ENCODE measurements at regions of chr11 and their contacts with region 1.

Region 1: DNA sequence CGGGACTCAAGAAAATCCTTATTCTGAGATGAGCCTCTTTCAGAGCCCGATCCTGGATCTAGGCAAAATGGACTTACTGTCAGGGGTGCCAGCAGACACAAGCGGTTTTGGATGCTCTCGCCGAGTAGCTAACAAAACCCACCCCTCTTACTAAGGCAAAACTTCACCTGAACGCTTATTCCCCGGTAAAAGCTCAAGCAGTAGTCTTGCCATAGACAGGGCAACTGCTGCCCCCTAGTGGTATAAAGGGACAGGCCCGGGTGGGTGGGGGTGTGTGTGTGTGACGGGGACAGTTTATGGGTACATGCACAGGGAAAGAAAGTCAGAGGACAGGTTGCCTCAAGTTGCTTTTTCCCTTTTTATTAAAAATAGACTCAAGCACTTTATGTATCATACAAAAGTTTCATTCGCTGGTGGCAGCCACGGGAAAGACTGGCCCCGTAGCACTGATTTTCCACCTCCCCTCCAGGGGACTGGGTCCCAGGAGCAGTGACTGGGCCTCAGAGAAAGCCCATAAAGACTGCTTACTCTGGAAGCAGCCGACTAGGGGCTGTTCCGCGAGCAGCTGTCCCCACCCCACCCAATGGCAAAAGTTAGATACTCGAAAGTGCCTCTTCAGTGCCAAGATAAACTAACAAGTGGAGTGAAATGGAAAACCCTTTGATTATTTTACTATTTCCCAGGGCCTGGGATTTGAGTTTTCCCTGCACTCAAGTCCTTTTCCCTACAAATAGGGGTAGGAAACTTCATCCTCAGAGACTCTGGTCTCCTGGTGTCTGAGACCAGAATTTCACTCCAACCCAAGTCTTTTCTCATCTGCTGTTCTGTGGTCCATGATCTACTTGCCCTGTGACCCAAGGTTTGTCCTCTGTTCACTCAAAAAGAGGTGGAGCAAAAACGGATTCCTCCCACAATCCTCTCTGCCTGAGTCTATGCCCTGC is 4.7 kb downstream of the YPEL4 start:
- DNase-seq: peak; percentile 87
- H3K4me3 ChIP-seq: no peak overlapping the region
- H3K27ac ChIP-seq: peak overlapping the region in 3 of 4 donors; percentile 10 to 64 (median 21)
- H3K4me1 ChIP-seq: peaks cover 10 to 63% (median 16%) of the 10 kb centered on the region in 4 donors
- H3K27me3 ChIP-seq: peaks cover 50% of the 10 kb centered on the region
- CTCF ChIP-seq: peak; percentile 76 to 93 (median 91)
- EP300 ChIP-seq: no peak
- POLR2A ChIP-seq: no peak

Region 2: GRCh38 chr11:57324886-57325734 is 319.9 kb before region 1 on chr11 and contains the start of gene TNKS1BP1:
- in situ Hi-C with region 1: loop called in 2 of 4 experiments (anchors 25 kb)
- intact Hi-C with region 1: no loop called
- DNase-seq: peak; percentile 99
- H3K4me3 ChIP-seq: peak within 1 kb of the TSS; percentile 81 to 97 (median 86)
- H3K27ac ChIP-seq: peak within 1 kb of the TSS; percentile 92 to 98 (median 96)
- H3K4me1 ChIP-seq: peaks cover 20 to 56% (median 49%) of the 10 kb centered on the region in 4 donors
- H3K27me3 ChIP-seq: no peaks in the 10 kb centered on the region
- CTCF ChIP-seq: peak in 2 of 5 experiments; percentile 34 to 35
- EP300 ChIP-seq: no peak
- POLR2A ChIP-seq: peak; percentile 90
- total RNA-seq, gene TNKS1BP1: 74.3 to 122 (median 119) TPM

Region 3: DNA sequence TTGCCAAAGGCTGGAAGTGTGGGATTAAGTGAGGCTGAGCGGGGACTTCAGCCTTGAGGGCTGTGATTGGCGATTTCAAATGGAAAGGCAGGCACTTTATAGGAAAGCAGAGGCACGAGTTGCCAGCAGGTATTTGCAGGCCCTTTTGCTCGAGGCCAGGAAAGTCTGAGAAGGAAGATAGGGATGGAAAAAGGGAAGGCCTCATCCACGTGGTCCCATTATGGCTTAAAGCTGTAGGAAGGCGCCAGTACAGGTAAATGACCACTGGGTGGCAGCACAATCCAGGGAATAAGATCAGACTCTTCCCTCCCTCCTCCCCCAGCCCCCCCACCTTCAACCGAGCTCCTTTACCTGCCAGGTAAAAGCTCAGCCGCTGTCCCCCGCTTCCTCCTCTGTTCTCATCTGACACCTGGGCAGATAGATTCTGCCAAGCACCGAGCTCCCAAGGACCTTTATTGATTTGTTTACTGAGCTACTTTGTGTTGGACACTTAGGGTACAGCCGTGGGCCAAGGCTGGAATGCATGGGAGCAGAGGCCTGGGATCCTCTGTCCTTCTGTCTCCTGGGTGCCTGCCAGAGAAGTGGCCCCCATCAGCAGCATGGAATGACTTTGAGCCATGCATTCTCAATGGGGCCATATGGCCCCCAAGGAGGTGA is 299.3 kb before region 1 on chr11:
- in situ Hi-C with region 1: loop called in 3 of 4 experiments (anchors 10 to 25 kb)
- intact Hi-C with region 1: no loop called
- DNase-seq: peak; percentile 84
- H3K4me3 ChIP-seq: no peak overlapping the region
- H3K27ac ChIP-seq: no peak overlapping the region
- H3K4me1 ChIP-seq: peaks cover 0 to 9% (median 0%) of the 10 kb centered on the region in 4 donors
- H3K27me3 ChIP-seq: no peaks in the 10 kb centered on the region
- CTCF ChIP-seq: peak; percentile 70 to 86 (median 80)
- EP300 ChIP-seq: no peak
- POLR2A ChIP-seq: no peak

Region 4: GRCh38 chr11:57456960-57457642 is 187.9 kb before region 1 on chr11:
- in situ Hi-C with region 1: loop called in 2 of 4 experiments (anchors 25 kb)
- intact Hi-C with region 1: no loop called
- DNase-seq: peak; percentile 88
- H3K4me3 ChIP-seq: no peak overlapping the region
- H3K27ac ChIP-seq: no peak overlapping the region
- H3K4me1 ChIP-seq: peaks cover 27 to 46% (median 38%) of the 10 kb centered on the region in 4 donors
- H3K27me3 ChIP-seq: peaks cover 48% of the 10 kb centered on the region
- CTCF ChIP-seq: peak; percentile 93 to 100 (median 99)
- EP300 ChIP-seq: no peak
- POLR2A ChIP-seq: no peak

Region 5: DNA sequence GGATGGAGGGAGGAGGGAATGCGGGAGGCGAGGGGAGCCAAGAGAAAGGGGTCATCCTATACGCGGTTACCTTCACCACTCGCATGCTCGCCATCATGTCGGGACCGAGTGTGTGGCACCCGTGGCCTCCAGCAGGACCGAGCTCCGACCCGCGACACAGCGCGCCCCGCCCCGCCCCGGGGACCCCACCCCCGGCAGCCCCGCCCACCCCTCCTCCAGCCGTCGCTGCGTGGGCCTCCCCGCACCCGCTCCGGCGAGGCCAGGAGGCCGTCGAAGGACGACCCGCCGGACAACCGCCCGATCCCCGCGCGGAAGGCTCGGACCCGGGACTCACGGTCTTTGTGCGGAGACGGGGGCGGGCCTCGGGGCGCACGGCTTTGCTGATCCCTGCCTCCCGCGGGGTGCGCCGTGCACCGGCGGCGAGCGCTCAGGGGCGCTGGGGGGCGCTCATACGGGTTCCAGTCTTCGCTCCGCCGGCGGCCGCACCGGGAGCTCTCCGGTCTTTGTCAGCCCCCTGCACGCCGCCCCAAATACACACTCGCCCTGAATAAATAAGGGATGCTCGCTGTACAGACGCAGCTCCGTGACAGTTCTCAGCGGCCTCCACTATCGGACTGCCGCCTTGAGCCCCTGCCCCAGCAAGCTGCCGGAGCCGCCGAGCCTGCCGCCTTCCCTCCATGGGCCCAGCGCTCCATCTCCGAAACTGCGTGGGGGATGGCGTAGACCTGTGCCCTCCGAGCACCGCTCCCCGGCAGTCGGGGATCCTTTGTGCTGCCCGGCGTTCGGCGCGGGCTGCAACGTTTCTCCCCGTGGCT is 77.3 kb before region 1 on chr11 and contains the start of gene UBE2L6:
- in situ Hi-C with region 1: loop called in 2 of 4 experiments (anchors 5 to 10 kb)
- intact Hi-C with region 1: loop called (anchors 1 kb)
- DNase-seq: peak; percentile 87
- H3K4me3 ChIP-seq: peak within 1 kb of the TSS; percentile 70 to 81 (median 76)
- H3K27ac ChIP-seq: peak within 1 kb of the TSS; percentile 82 to 90 (median 88)
- H3K4me1 ChIP-seq: peaks cover 10 to 27% (median 16%) of the 10 kb centered on the region in 4 donors
- H3K27me3 ChIP-seq: no peaks in the 10 kb centered on the region
- CTCF ChIP-seq: no peak
- EP300 ChIP-seq: no peak
- POLR2A ChIP-seq: no peak
- total RNA-seq, gene UBE2L6: 15.3 to 24.3 (median 20.6) TPM

Region 6: GRCh38 chr11:57667736-57668435 is 22.9 kb after region 1 on chr11 and contains the start of gene ZDHHC5:
- in situ Hi-C with region 1: no loop called
- intact Hi-C with region 1: no loop called
- DNase-seq: peak; percentile 99
- H3K4me3 ChIP-seq: peak within 1 kb of the TSS; percentile 67 to 96 (median 83)
- H3K27ac ChIP-seq: peak within 1 kb of the TSS; percentile 94 to 99 (median 98)
- H3K4me1 ChIP-seq: peaks cover 11 to 25% (median 22%) of the 10 kb centered on the region in 4 donors
- H3K27me3 ChIP-seq: no peaks in the 10 kb centered on the region
- CTCF ChIP-seq: peak in 4 of 5 experiments; percentile 28 to 63 (median 48)
- EP300 ChIP-seq: no peak
- POLR2A ChIP-seq: peak; percentile 87
- total RNA-seq, gene ZDHHC5: 38.4 to 63.2 (median 57.6) TPM